HepG2 (cell line): ENCODE measurements at regions of chr1 and their contacts with region 1.

Region 1: DNA sequence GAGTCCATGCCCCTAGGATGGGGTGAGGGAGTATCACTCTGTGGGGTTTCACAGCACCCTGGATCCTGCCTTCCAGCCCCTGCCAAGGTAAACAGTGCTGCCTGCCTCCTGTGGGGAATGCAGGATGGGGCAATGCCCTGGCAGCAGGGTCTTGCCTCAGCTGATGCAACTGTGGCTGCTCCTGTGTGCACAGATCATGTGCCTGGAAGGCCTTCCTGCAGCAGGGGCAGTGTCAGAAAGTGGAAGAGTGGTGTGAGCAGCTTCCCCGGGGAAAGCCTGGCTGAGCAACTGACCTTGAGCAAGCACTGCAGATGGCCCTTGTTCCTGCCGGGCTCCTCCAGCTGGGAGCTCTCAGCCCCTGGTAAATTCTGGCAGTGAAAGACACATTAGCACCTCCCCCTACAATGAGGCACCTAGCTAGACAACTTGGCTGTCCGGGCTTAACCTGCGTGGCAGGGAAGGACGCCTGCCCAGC is 9.9 kb downstream of the TOR3A start:
- DNase-seq: peak; percentile 62
- ATAC-seq: peak; percentile 77
- H3K4me3 ChIP-seq: no peak overlapping the region
- H3K27ac ChIP-seq: peak overlapping the region; percentile 62
- H3K4me1 ChIP-seq: peaks cover 42% of the 10 kb centered on the region
- H3K27me3 ChIP-seq: no peaks in the 10 kb centered on the region
- CTCF ChIP-seq: peak; percentile 31
- EP300 ChIP-seq: no peak
- POLR2A ChIP-seq: peak in 1 of 2 experiments; percentile 19; a peak in 1 of 4 replicates
- RAD21 ChIP-seq: 0 out of 2 replicates have a peak, but pooled peaks have one; percentile 26

Region 2: DNA sequence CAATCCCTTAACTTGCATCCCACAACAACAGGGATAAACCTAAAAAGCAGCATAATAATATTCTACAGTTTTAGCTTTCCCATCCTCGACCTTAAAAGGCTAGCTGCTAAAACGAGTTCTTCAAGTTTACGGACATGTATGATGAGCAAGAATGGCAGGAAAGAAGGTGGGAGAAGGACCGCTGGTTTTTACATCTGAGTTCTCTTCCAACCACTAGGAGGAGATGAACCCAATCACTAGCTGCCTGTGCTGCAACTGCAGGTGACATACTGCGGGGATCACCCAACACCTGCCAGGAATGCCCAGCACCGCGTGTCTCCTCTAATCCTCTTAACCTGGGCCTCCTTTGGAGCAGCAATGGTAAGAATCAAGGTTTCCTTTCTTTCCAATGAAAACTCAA is 13.6 kb after region 1 on chr1:
- CTCF ChIA-PET with region 1: no interaction called
- POLR2A ChIA-PET with region 1: interaction called, 20 read pairs
- in situ Hi-C with region 1: no loop called
- intact Hi-C with region 1: no loop called
- DNase-seq: peak; percentile 55
- ATAC-seq: peak; percentile 79
- H3K4me3 ChIP-seq: no peak overlapping the region; a peak in 1 of 6 replicates
- H3K27ac ChIP-seq: peak overlapping the region; percentile 66
- H3K4me1 ChIP-seq: peaks cover 57% of the 10 kb centered on the region
- H3K27me3 ChIP-seq: no peaks in the 10 kb centered on the region
- CTCF ChIP-seq: peak; percentile 72
- EP300 ChIP-seq: no peak
- POLR2A ChIP-seq: no peak
- RAD21 ChIP-seq: no peak; the same call in 1 of the 2 replicates

Region 3: GRCh38 chr1:179129702-179130473 is 38.2 kb after region 1 on chr1:
- CTCF ChIA-PET with region 1: no interaction called
- POLR2A ChIA-PET with region 1: no interaction called
- in situ Hi-C with region 1: no loop called
- intact Hi-C with region 1: loop called (anchors 2 kb)
- DNase-seq: no peak
- ATAC-seq: peak; percentile 57; the same call in 2 of the 3 replicates
- H3K4me3 ChIP-seq: no peak overlapping the region
- H3K27ac ChIP-seq: no peak overlapping the region
- H3K4me1 ChIP-seq: peaks cover 15% of the 10 kb centered on the region
- H3K27me3 ChIP-seq: no peaks in the 10 kb centered on the region
- CTCF ChIP-seq: no peak
- EP300 ChIP-seq: no peak
- POLR2A ChIP-seq: no peak
- RAD21 ChIP-seq: no peak

Region 4: GRCh38 chr1:179142889-179143299 is 51.2 kb after region 1 on chr1:
- CTCF ChIA-PET with region 1: no interaction called
- POLR2A ChIA-PET with region 1: no interaction called
- in situ Hi-C with region 1: no loop called
- intact Hi-C with region 1: no loop called
- DNase-seq: peak; percentile 33
- ATAC-seq: no peak
- H3K4me3 ChIP-seq: no peak overlapping the region
- H3K27ac ChIP-seq: no peak overlapping the region
- H3K4me1 ChIP-seq: peaks cover 14% of the 10 kb centered on the region
- H3K27me3 ChIP-seq: no peaks in the 10 kb centered on the region
- CTCF ChIP-seq: no peak
- EP300 ChIP-seq: no peak
- POLR2A ChIP-seq: no peak
- RAD21 ChIP-seq: no peak